Right ventricle myocardium inferior (tissue), 1 donor: ENCODE measurements at regions of chr1 and their contacts with region 1.

Region 1: DNA sequence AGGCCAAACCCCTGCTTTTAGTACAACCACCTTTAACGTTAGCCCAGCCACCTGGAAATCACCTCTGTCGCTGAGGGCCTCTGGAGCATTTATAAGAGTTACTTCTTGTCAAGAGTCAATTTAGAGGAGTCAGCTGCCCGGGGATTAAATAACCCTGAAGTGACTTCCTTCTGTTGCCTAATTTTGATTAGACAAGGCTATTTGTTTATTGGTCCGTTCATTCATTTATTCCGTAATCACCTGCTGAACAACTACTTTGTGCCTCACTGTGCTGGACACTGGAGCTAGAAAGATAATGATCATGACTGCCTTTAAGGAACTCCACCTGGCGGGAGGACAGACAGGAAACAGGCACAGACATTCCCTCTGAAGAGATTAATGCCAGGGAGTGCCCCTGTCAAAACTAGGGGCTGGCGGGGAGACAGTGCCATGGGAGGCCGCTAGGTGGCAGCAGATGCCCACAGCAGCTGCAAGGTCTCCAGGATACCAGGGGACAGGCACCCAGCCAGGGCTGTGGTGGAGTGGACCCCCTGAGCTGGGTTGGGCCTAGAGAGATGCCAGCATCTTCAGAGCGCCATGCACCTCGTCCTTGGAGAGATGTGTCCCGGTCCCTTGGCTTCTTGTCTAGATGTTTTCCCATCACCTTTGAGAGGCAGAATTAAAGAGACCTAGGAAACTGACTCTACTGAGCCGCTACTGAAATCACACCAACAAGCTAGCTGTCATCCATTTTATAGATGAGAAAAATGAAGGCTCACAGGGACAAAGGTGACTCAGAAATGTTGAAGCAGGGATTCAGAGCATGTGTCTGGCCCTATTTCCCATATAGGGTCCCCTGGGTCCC is 3.7 kb downstream of the REN start:
- DNase-seq: peak; percentile 89
- ATAC-seq: peak; percentile 84

Region 2: GRCh38 chr1:204142032-204142974 is 20.1 kb before region 1 on chr1:
- intact Hi-C with region 1: no loop called
- DNase-seq: no peak
- ATAC-seq: no peak

Region 3: DNA sequence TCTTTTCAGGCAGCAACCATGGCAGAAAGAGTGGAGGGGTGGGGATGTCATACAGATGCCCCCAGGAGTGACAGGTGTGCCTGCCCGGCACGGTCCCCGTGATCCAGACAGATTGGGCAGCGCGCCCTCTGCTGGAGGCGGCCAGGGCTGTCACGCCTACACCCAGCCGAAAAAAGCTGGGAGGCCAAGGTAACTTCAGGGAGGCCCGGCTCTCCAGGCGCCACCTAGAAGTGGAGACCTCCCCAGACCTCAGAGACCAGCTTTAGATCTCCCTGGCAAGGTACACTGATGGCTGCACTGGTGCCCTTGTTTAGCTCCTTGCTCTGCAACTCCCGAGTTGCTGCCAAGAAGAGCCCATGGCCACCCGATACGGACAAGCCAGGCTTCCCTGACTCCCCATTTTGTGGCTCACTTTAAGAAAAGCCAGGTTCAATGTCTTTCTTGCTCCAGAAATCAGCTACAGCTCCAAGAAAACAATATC is 44.7 kb after region 1 on chr1:
- intact Hi-C with region 1: loop called (anchors 1 kb)
- DNase-seq: no peak
- ATAC-seq: peak; percentile 84

Region 4: DNA sequence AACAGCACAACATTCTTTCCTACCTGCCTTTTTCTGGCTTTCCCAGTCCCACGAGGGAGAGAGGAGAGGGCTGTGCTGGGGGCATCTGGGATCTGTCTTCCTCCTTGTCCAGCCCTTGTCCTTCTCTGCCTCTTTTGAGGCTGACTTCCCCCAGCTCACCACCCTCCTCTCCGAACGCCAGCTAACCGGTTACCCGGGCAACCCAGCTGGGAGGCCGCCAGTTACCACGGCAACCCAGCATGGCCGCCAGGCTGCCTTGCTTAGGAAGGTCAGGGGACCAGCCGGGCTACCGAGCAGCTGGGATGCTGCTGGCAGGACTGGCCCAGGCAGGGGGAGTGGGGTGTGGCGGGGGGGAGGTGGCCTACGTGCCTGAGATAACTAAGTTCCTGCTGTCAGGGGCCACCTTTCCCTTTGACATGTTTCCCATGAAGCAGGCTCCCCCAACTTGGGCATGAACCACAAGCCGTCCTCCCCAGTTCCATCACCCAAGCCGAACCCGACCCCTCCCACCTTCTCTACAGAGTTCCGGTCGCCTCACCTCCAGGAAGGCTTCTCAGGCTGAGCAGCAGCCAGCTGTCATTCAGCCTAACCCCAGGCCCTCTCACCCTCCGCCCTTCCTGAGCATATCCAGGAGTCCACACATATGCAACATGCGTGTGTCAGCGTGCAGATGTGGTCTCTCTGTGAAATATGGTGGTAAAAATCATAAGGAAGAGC is 188.6 kb after region 1 on chr1:
- intact Hi-C with region 1: no loop called
- DNase-seq: peak; percentile 87
- ATAC-seq: peak; percentile 49

Region 5: GRCh38 chr1:204398217-204399081 is 236.0 kb after region 1 on chr1:
- intact Hi-C with region 1: loop called (anchors 2 kb)
- DNase-seq: no peak
- ATAC-seq: peak; percentile 52